Posterior vena cava (tissue), 2 donors: ENCODE measurements at regions of chr11 and their contacts with region 1.

Region 1: DNA sequence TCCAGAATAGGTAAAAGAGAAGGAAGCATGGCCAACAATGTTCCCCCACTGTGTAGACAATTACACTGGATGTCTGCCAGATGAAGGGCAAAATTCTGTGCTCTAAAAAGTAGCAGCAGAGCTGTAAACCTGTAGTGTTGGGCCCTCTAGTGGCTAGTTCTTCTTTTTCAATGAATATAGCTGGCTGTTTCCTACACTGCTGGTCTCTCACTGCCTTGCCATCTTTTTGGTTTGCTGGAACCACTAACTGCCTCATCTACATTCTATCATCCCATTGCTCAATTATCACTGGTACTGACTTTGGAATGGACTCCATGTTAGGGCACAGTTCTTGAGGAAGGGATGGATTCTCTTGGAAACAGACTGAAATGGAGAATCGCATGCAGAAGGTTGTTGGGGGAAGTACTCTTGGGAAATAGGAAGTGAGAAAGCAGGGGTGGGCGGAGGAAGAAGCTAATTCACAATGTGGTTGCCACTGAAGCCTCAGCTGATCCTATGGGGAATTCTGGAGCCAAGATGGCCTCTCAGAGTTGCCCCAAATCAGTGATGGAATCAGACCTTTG is 17.9 kb downstream of the KCNE3 start:
- DNase-seq: no peak

Region 2: GRCh38 chr11:73680687-73681086 is 768.8 kb before region 1 on chr11:
- intact Hi-C with region 1: no loop called
- DNase-seq: no peak

Region 3: DNA sequence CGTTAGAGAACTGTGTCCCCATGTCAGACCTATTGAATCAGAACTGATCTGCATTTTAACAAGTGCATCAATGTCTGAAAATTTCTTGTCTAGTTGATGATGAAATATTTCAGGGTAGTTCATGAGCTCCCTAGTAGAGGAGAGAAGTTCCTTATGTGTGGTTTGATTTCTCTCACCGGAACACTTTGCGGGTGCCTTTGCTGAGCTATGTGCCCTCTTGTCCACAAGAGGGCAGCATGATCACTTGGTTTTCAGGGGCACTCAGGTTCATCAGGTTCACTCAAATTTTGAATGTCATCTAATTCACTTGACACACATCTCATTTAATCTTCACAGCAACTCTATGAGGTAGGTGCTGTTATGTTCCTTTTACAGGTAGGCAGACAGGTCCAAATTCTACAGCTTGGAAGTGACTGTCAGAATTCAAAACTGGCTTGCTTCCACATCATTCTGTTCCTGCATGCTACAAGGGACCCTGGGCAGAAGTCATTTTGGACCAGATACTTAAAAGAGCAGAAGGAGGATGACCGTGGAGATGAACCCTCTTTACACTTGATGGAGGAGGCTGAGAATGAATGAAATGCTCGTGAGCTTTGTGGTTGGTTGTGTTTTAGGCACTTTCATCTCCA is 193.6 kb before region 1 on chr11:
- intact Hi-C with region 1: loop called (anchors 2 to 5 kb)
- DNase-seq: no peak

Region 4: GRCh38 chr11:74377689-74378088 is 71.8 kb before region 1 on chr11:
- intact Hi-C with region 1: loop called in 1 of 2 experiments (anchors 2 kb)
- DNase-seq: no peak

Region 5: DNA sequence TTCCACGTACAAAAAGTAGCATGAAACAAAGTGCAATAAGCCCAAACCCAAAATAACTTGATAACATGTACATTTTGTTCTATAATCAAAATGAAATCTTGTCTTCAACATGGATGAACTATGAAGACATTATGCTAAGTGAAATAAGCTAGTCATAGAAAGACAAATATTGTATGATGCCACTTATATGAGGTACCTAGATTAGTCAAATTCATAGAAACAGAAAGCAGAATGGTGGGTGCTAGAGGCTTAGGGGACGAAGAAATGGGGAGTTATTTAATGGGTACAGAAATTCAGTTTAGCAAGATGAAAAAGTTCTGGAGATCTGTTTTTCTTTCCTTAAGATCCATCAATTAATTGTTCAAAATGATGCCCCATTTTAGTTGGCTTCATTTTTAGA is 58.8 kb before region 1 on chr11:
- intact Hi-C with region 1: loop called in 1 of 2 experiments (anchors 5 kb)
- DNase-seq: no peak

Region 6: GRCh38 chr11:74570266-74571061 is 121.0 kb after region 1 on chr11:
- intact Hi-C with region 1: loop called (anchors 5 kb)
- DNase-seq: no peak

Region 7: DNA sequence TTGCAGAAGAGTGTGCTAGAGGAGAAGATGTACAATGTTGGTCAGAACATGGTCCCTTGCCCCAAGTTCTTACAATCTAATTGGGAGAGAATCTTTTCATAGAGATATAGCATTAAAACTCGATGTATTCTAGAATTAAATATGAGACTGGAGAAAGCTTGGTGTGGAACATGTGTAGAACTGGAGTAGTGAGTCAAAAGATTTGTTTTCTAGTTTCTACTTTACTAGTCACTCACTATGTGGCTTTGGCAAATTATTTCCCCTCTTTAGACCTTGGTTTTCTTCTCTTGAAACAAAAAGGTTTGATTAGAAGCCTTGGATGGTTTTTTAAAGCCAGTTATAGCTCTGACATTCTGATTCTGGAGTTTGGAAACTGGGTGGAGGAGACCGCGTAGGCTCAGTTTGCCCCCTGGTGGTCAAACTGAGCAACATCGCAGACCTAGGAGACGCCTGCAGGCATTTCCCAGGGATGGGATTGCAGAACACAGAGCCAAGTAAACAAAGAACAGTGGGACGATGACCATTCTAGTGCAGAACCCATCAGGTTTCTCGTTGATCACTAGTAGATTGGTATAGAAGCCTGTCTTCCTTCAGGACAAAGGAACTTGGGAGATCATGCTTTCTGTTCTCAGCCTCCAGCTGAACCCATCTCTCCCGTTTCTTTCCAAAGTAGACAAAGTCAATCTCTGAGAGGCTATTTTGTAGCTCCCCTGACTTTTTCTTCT is 290.3 kb after region 1 on chr11:
- intact Hi-C with region 1: loop called in 1 of 2 experiments (anchors 5 kb)
- DNase-seq: no peak

Region 8: GRCh38 chr11:74754507-74755255 is 305.2 kb after region 1 on chr11:
- intact Hi-C with region 1: no loop called
- DNase-seq: no peak